ENCODE measurements at regions of chr12 and their contacts with region 1.

Region 1: GRCh38 chr12:62799126-62799736 is 135.7 kb downstream of the PPM1H start:
- DNase-seq: peak; percentile 42
- H3K4me3 ChIP-seq: no peak overlapping the region
- H3K27ac ChIP-seq: no peak overlapping the region
- H3K4me1 ChIP-seq: peaks cover 0 to 3% (median 0%) of the 10 kb centered on the region in 4 donors
- H3K27me3 ChIP-seq: no peaks in the 10 kb centered on the region
- CTCF ChIP-seq: peak; percentile 87 to 97 (median 91)
- EP300 ChIP-seq: no peak
- POLR2A ChIP-seq: no peak

Region 2: DNA sequence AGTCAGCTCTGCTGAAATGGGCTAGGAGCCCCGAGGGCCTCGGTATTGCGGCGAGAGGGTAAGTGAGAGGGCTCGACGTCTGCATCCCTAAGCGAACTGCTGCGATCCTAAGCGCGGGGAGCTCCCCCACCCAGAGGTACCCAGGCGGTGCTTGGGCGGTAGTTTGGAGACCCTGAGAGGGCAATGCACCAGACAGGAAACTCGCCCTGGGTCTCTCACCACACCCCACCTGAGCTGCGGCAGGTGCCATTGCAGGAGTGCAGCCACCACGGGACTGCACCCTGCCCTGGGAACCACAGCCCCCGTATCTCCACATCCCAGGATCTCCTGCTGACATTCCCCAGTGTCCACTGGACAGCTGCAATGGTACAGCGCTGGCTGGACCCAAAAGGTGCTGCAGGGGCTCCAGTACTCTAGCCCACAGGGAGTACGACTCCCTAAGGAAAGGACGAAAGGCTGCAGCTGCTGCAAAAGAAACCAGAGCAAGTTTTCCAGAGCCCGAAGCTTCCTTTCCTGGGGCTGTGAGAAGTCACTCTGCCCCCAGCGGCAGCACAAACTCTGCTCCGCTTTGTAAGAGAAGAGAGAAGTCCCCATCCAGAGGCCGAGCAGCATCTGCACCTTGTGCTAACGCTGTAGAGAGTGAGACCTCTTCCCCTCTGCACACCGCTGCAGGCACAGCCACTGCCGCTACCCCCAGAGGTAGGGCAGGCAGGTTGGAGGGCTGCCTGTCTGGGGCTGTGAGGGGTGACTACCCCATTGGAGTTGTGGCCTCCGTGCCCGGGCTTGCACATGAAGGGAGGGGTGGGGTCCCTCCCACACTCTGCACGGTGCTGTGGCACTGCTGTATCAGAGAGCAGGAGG is 363.7 kb before region 1 on chr12:
- in situ Hi-C with region 1: loop called in 3 of 4 experiments (anchors 5 to 25 kb)
- intact Hi-C with region 1: loop called (anchors 5 kb)
- DNase-seq: peak; percentile 52
- H3K4me3 ChIP-seq: peak overlapping the region; percentile 19 to 61 (median 36)
- H3K27ac ChIP-seq: no peak overlapping the region
- H3K4me1 ChIP-seq: peaks cover 0 to 12% (median 10%) of the 10 kb centered on the region in 4 donors
- H3K27me3 ChIP-seq: peaks cover 35% of the 10 kb centered on the region
- CTCF ChIP-seq: peak; percentile 13 to 35 (median 30)
- EP300 ChIP-seq: no peak
- POLR2A ChIP-seq: no peak

Region 3: GRCh38 chr12:62446754-62447452 is 352.3 kb before region 1 on chr12:
- in situ Hi-C with region 1: loop called in 3 of 4 experiments (anchors 5 to 25 kb)
- intact Hi-C with region 1: no loop called
- DNase-seq: no peak
- H3K4me3 ChIP-seq: no peak overlapping the region
- H3K27ac ChIP-seq: peak overlapping the region; percentile 18 to 56 (median 54)
- H3K4me1 ChIP-seq: peaks cover 0 to 5% (median 4%) of the 10 kb centered on the region in 4 donors
- H3K27me3 ChIP-seq: no peaks in the 10 kb centered on the region
- CTCF ChIP-seq: no peak
- EP300 ChIP-seq: no peak
- POLR2A ChIP-seq: no peak

Region 4: DNA sequence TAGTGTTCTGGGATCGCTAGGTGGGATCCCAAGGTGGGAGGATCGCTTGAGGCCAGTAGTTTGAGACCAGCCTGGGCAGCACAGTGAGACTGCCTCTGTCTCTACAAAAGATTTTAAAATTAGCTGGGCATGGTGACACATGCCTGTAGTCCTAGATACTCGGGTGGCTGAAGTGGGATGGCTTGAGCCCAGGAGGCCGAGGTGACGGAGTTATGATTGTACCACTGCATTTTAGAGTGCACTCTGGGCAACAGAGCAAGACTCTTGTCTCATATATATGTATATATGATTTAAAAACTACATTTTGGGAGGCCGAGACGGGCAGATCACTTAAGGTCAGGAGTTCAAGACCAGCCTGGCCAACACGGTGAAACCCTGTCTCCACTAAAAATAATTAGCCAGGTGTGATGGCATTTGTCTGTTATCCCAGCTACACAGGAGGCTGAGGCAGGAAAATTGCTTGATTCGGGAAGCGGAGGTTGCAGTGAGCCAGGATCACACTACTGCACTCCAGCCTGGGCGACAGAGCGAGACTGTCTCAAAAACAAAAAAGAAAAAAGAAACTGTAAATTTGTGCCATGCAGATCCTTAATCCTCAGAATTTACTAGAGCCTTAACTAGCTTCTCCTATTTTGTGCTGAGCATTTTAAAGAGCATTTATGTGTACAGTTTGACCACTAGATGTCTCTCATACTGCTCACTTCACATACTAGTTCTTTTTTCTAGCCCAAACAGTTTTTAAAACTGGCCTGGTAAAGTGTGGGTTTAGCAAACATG is 217.8 kb before region 1 on chr12:
- in situ Hi-C with region 1: loop called in 2 of 4 experiments (anchors 5 to 10 kb)
- intact Hi-C with region 1: loop called (anchors 5 kb)
- DNase-seq: no peak
- H3K4me3 ChIP-seq: no peak overlapping the region
- H3K27ac ChIP-seq: no peak overlapping the region
- H3K4me1 ChIP-seq: no peaks in the 10 kb centered on the region
- H3K27me3 ChIP-seq: no peaks in the 10 kb centered on the region
- CTCF ChIP-seq: peak; percentile 64 to 69 (median 68)
- EP300 ChIP-seq: no peak
- POLR2A ChIP-seq: no peak

Measured in transverse colon (tissue), 4 donors.